ENCODE measurements at regions of chr7 and their contacts with region 1.

Region 1: GRCh38 chr7:121420979-121421378 is 24.9 kb upstream of the FAM3C start:
- DNase-seq: peak; percentile 69 to 81
- H3K4me3 ChIP-seq: no peak overlapping the region
- H3K4me3 Mint-ChIP-seq: peak overlapping the region; percentile 37
- H3K27ac Mint-ChIP-seq: peak overlapping the region; percentile 48
- H3K4me1 ChIP-seq: peaks cover 27% of the 10 kb centered on the region
- H3K4me1 Mint-ChIP-seq: peaks cover 8% of the 10 kb centered on the region
- H3K27me3 ChIP-seq: no peaks in the 10 kb centered on the region
- H3K27me3 Mint-ChIP-seq: no peaks in the 10 kb centered on the region
- CTCF ChIP-seq: no peak

Region 2: GRCh38 chr7:121195874-121196755 is 224.9 kb before region 1 on chr7:
- CTCF ChIA-PET with region 1: no interaction called
- POLR2A ChIA-PET with region 1: no interaction called
- intact Hi-C with region 1: no loop called
- DNase-seq: no peak
- H3K4me3 ChIP-seq: no peak overlapping the region
- H3K4me3 Mint-ChIP-seq: no peak overlapping the region
- H3K27ac Mint-ChIP-seq: no peak overlapping the region
- H3K4me1 ChIP-seq: no peaks in the 10 kb centered on the region
- H3K4me1 Mint-ChIP-seq: no peaks in the 10 kb centered on the region
- H3K27me3 ChIP-seq: no peaks in the 10 kb centered on the region; the same call in 1 of the 2 replicates
- H3K27me3 Mint-ChIP-seq: peaks cover 4% of the 10 kb centered on the region
- CTCF ChIP-seq: no peak

Region 3: GRCh38 chr7:121262221-121262620 is 158.8 kb before region 1 on chr7:
- CTCF ChIA-PET with region 1: no interaction called
- POLR2A ChIA-PET with region 1: no interaction called
- intact Hi-C with region 1: no loop called
- DNase-seq: no peak
- H3K4me3 ChIP-seq: no peak overlapping the region
- H3K4me3 Mint-ChIP-seq: no peak overlapping the region
- H3K27ac Mint-ChIP-seq: no peak overlapping the region
- H3K4me1 ChIP-seq: no peaks in the 10 kb centered on the region
- H3K4me1 Mint-ChIP-seq: no peaks in the 10 kb centered on the region
- H3K27me3 ChIP-seq: no peaks in the 10 kb centered on the region
- H3K27me3 Mint-ChIP-seq: peaks cover 6% of the 10 kb centered on the region
- CTCF ChIP-seq: no peak

Region 4: DNA sequence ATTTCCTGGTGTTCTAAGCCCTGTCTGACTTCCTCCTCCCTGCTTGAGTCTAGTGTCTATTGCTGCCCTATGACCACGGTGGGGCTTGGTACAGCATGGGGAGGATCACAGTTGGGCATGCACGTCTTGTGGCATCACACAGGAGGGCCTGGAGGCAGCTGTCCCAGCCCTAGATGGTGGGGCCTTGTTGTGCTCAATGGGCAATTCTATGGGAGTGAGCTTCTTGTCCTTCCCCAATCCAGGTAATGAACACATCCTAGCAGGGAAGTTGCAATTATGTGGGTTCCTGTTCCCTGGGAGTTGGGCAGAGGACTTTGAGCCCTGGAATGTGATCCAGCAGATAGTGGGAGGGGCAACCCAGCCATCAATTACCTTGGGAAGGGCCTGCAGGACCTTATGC is 14.0 kb before region 1 on chr7:
- CTCF ChIA-PET with region 1: no interaction called
- POLR2A ChIA-PET with region 1: no interaction called
- intact Hi-C with region 1: loop called (anchors 1 kb)
- DNase-seq: peak; percentile 65 to 78
- H3K4me3 ChIP-seq: no peak overlapping the region
- H3K4me3 Mint-ChIP-seq: no peak overlapping the region
- H3K27ac Mint-ChIP-seq: peak overlapping the region; percentile 79
- H3K4me1 ChIP-seq: peaks cover 20% of the 10 kb centered on the region
- H3K4me1 Mint-ChIP-seq: peaks cover 15% of the 10 kb centered on the region
- H3K27me3 ChIP-seq: no peaks in the 10 kb centered on the region
- H3K27me3 Mint-ChIP-seq: no peaks in the 10 kb centered on the region
- CTCF ChIP-seq: no peak

Region 5: GRCh38 chr7:121437456-121438127 is 16.6 kb after region 1 on chr7:
- CTCF ChIA-PET with region 1: no interaction called
- POLR2A ChIA-PET with region 1: no interaction called
- intact Hi-C with region 1: loop called (anchors 1 kb)
- DNase-seq: no peak
- H3K4me3 ChIP-seq: no peak overlapping the region
- H3K4me3 Mint-ChIP-seq: peak overlapping the region; percentile 74
- H3K27ac Mint-ChIP-seq: peak overlapping the region; percentile 81
- H3K4me1 ChIP-seq: peaks cover 23% of the 10 kb centered on the region
- H3K4me1 Mint-ChIP-seq: peaks cover 13% of the 10 kb centered on the region
- H3K27me3 ChIP-seq: no peaks in the 10 kb centered on the region
- H3K27me3 Mint-ChIP-seq: no peaks in the 10 kb centered on the region
- CTCF ChIP-seq: no peak